ENCODE measurements at regions of chr5 and their contacts with region 1.

Region 1: GRCh38 chr5:41083306-41083705 is 12.2 kb upstream of the MROH2B start:
- DNase-seq: no peak
- ATAC-seq: peak; percentile 46

Region 2: GRCh38 chr5:41097642-41098041 is 14.3 kb after region 1 on chr5:
- intact Hi-C with region 1: loop called (anchors 1 kb)
- DNase-seq: no peak
- ATAC-seq: no peak